ENCODE measurements at regions of chr9 and their contacts with region 1.

Region 1: GRCh38 chr9:115972843-115973595 is 180.6 kb upstream of the PAPPA start:
- DNase-seq: peak; percentile 45
- ATAC-seq: peak; percentile 54
- H3K4me3 ChIP-seq: no peak overlapping the region
- H3K27ac ChIP-seq: peak overlapping the region; percentile 83; the same call in 1 of the 2 replicates
- H3K4me1 ChIP-seq: peaks cover 5% of the 10 kb centered on the region; the same call in 1 of the 2 replicates
- H3K27me3 ChIP-seq: no peaks in the 10 kb centered on the region
- CTCF ChIP-seq: no peak
- POLR2A ChIP-seq: no peak
- RAD21 ChIP-seq: no peak

Region 2: DNA sequence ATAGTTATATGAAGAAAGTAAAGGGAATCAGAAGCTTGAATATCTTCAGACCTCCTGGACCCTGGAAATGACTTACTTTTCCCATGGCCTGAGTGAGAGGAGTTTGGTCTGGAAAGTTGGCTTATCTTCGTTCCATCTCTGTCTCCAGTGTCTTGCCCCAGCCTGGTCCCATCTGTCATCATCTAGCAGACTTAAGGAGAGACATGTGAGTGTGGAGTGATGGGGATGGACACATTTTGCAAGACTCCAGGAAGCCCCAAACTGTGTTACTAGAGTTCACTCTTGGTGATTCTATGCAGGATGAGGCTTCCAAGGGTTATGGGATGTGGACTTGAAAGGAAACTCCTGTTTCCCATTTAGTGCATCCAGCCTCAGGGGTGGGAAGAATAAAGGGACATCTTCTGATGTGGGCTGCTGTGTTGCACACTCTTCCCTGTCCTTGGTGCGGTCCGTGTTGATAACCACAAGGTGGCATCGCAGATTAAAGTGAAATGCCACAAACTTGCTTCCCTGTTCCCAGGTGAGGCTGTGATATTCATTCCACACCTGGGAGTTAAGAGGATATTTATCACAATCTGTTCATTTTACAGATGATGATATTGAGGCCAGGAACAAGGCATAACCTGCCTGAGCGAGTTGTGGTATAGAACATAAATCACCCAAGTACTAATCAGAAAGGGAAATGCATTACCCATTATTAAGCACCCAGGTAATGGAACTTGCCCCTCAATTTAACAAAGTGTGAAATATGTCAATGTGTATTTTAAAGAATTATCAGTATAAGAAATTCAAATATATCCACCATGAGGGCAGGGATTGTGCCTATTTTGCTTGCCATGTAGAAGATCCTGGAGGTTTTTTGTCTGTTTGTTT is 89.3 kb before region 1 on chr9:
- CTCF ChIA-PET with region 1: no interaction called
- POLR2A ChIA-PET with region 1: no interaction called
- dilution Hi-C with region 1: no loop called
- in situ Hi-C with region 1: no loop called
- intact Hi-C with region 1: no loop called
- DNase-seq: peak; percentile 60
- ATAC-seq: peak; percentile 75
- H3K4me3 ChIP-seq: no peak overlapping the region
- H3K27ac ChIP-seq: peak overlapping the region; percentile 1; the same call in 1 of the 2 replicates
- H3K4me1 ChIP-seq: peaks cover 11% of the 10 kb centered on the region
- H3K27me3 ChIP-seq: no peaks in the 10 kb centered on the region
- CTCF ChIP-seq: peak; percentile 66
- POLR2A ChIP-seq: no peak
- RAD21 ChIP-seq: peak; percentile 83

Region 3: GRCh38 chr9:115923903-115924668 is 48.9 kb before region 1 on chr9:
- CTCF ChIA-PET with region 1: no interaction called
- POLR2A ChIA-PET with region 1: no interaction called
- dilution Hi-C with region 1: no loop called
- in situ Hi-C with region 1: no loop called
- intact Hi-C with region 1: loop called (anchors 1 kb)
- DNase-seq: peak; percentile 99
- ATAC-seq: peak; percentile 99
- H3K4me3 ChIP-seq: no peak overlapping the region
- H3K27ac ChIP-seq: peak overlapping the region; percentile 100
- H3K4me1 ChIP-seq: peaks cover 26% of the 10 kb centered on the region
- H3K27me3 ChIP-seq: no peaks in the 10 kb centered on the region
- CTCF ChIP-seq: no peak
- POLR2A ChIP-seq: no peak
- RAD21 ChIP-seq: no peak; the same call in none of the 2 replicates

Measured in IMR-90 (cell line).